Heart right ventricle (tissue), 16 donors: ENCODE measurements at regions of chr4 and their contacts with region 1.

Region 1: GRCh38 chr4:15084780-15085179 is 82.5 kb downstream of the CPEB2 start:
- DNase-seq: no peak
- ATAC-seq: no peak
- H3K4me3 ChIP-seq: no peak overlapping the region
- H3K27ac ChIP-seq: no peak overlapping the region
- H3K4me1 ChIP-seq: no peaks in the 10 kb centered on the region
- H3K27me3 ChIP-seq: no peaks in the 10 kb centered on the region
- CTCF ChIP-seq: no peak

Region 2: DNA sequence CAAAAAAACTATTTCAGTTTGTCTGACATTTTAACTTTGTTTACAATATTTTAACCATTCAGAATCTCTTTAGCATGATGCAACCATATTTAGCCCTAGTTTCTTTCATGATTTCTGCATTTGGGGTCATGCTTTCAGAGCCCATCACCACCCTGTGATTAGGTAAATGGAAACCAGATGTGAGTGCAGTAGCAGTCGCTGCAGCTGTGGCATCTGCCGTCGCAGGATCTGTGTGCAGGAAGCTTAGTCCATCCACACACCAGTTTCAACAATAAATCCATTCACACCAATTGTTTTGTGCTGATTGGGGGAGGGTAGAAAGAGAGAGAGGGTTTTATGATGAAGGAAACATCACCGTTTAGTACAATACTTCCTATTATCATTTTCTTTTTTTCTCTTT is 48.0 kb after region 1 on chr4:
- intact Hi-C with region 1: loop called in 1 of 10 experiments (anchors 5 kb)
- DNase-seq: no peak
- ATAC-seq: no peak
- H3K4me3 ChIP-seq: no peak overlapping the region
- H3K27ac ChIP-seq: no peak overlapping the region
- H3K4me1 ChIP-seq: no peaks in the 10 kb centered on the region
- H3K27me3 ChIP-seq: no peaks in the 10 kb centered on the region
- CTCF ChIP-seq: no peak

Region 3: GRCh38 chr4:15213302-15213970 is 128.7 kb after region 1 on chr4:
- intact Hi-C with region 1: no loop called
- DNase-seq: no peak
- ATAC-seq: no peak
- H3K4me3 ChIP-seq: no peak overlapping the region
- H3K27ac ChIP-seq: no peak overlapping the region
- H3K4me1 ChIP-seq: no peaks in the 10 kb centered on the region
- H3K27me3 ChIP-seq: no peaks in the 10 kb centered on the region
- CTCF ChIP-seq: no peak